IMR-90 (cell line): ENCODE measurements at regions of chr1 and their contacts with region 1.

Region 1: DNA sequence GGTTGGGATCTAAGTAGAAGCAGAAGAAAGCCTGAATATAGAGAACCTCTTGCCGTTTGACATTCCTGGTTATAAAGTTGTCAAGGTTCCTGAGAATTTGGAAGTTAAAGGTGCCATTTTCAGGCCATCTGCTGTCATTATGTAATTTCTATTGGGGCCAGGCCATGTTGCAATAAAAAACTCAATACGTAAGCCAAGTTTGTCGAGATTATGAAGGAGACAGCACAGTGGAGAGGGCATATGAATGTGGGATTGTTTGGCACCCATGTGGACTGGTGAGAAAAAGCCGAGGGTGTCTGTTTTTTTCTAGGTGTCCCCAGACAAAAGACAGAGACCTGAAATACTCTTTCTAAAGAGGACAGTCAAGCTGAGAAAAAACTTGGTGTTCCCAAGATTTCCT is 18.8 kb upstream of the HSD3B1 start:
- DNase-seq: no peak
- ATAC-seq: no peak
- H3K4me3 ChIP-seq: no peak overlapping the region
- H3K27ac ChIP-seq: no peak overlapping the region
- H3K4me1 ChIP-seq: no peaks in the 10 kb centered on the region
- H3K27me3 ChIP-seq: no peaks in the 10 kb centered on the region; the same call in 1 of the 2 replicates
- CTCF ChIP-seq: no peak
- POLR2A ChIP-seq: no peak
- RAD21 ChIP-seq: no peak

Region 2: GRCh38 chr1:119068427-119068826 is 419.8 kb before region 1 on chr1:
- CTCF ChIA-PET with region 1: interaction called, 10 read pairs
- POLR2A ChIA-PET with region 1: no interaction called
- dilution Hi-C with region 1: no loop called
- in situ Hi-C with region 1: no loop called
- intact Hi-C with region 1: no loop called
- DNase-seq: no peak
- ATAC-seq: no peak
- H3K4me3 ChIP-seq: no peak overlapping the region
- H3K27ac ChIP-seq: no peak overlapping the region
- H3K4me1 ChIP-seq: no peaks in the 10 kb centered on the region
- H3K27me3 ChIP-seq: no peaks in the 10 kb centered on the region
- CTCF ChIP-seq: no peak
- POLR2A ChIP-seq: no peak
- RAD21 ChIP-seq: no peak

Region 3: DNA sequence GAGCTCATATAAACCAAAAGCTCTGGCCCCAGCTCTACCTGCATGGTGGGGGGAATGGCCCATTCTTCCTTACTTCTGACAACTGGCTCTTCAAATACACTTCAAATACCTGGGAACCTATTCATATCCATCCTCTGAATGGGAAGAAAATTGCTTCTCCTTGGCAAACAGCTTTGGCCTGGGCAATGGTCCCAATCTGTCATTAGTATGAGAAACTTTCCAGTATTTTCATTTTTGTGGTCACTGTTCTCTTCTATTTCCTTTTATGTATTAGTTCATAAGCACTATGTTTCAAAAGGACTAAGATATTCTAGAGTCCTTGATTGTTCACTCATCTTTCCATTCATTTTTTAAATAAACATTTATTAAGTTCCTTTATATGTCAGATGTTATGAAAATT is 78.5 kb before region 1 on chr1:
- CTCF ChIA-PET with region 1: no interaction called
- POLR2A ChIA-PET with region 1: no interaction called
- dilution Hi-C with region 1: no loop called
- in situ Hi-C with region 1: no loop called
- intact Hi-C with region 1: no loop called
- DNase-seq: peak; percentile 11
- ATAC-seq: no peak
- H3K4me3 ChIP-seq: no peak overlapping the region
- H3K27ac ChIP-seq: no peak overlapping the region
- H3K4me1 ChIP-seq: no peaks in the 10 kb centered on the region
- H3K27me3 ChIP-seq: no peaks in the 10 kb centered on the region
- CTCF ChIP-seq: no peak
- POLR2A ChIP-seq: no peak
- RAD21 ChIP-seq: no peak